Breast epithelium (tissue), 4 donors: ENCODE measurements at regions of chr7 and their contacts with region 1.

Region 1: GRCh38 chr7:66654123-66654732 is 25.5 kb downstream of the KCTD7 start:
- DNase-seq: peak; percentile 97 to 98
- H3K4me3 ChIP-seq: peak overlapping the region; percentile 79 to 89 (median 81)
- H3K27ac ChIP-seq: peak overlapping the region; percentile 98
- H3K4me1 ChIP-seq: no peaks in the 10 kb centered on the region
- H3K27me3 ChIP-seq: no peaks in the 10 kb centered on the region
- CTCF ChIP-seq: peak in 2 of 3 donors; percentile 25 to 36
- POLR2A ChIP-seq: peak; percentile 92

Region 2: GRCh38 chr7:66409479-66409878 is 244.7 kb before region 1 on chr7:
- intact Hi-C with region 1: loop called (anchors 5 kb)
- DNase-seq: no peak
- H3K4me3 ChIP-seq: no peak overlapping the region
- H3K27ac ChIP-seq: no peak overlapping the region
- H3K4me1 ChIP-seq: no peaks in the 10 kb centered on the region
- H3K27me3 ChIP-seq: no peaks in the 10 kb centered on the region
- CTCF ChIP-seq: no peak
- POLR2A ChIP-seq: no peak

Region 3: DNA sequence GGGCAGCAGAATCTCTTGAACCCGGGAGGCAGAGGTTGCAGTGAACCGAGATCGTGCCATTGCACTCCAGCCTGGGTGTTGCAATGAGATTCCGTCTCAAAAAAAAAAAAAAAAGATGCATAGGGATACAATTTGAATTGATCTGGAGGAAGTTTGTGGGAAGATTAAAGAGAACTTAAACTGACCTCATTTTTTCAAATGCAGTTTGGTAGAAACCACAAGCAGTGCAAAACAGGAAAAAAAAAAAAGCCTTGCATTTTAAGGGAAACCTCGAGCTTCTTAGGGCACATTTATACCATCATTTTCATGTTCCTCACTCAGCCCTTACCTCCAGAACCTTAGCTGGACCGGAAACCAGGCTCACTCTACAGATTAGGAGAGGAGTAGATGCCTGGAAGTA is 22.8 kb before region 1 on chr7:
- intact Hi-C with region 1: loop called (anchors 1 kb)
- DNase-seq: no peak
- H3K4me3 ChIP-seq: no peak overlapping the region
- H3K27ac ChIP-seq: peak overlapping the region in 1 of 2 donors; percentile 7
- H3K4me1 ChIP-seq: no peaks in the 10 kb centered on the region
- H3K27me3 ChIP-seq: no peaks in the 10 kb centered on the region
- CTCF ChIP-seq: no peak
- POLR2A ChIP-seq: no peak

Region 4: DNA sequence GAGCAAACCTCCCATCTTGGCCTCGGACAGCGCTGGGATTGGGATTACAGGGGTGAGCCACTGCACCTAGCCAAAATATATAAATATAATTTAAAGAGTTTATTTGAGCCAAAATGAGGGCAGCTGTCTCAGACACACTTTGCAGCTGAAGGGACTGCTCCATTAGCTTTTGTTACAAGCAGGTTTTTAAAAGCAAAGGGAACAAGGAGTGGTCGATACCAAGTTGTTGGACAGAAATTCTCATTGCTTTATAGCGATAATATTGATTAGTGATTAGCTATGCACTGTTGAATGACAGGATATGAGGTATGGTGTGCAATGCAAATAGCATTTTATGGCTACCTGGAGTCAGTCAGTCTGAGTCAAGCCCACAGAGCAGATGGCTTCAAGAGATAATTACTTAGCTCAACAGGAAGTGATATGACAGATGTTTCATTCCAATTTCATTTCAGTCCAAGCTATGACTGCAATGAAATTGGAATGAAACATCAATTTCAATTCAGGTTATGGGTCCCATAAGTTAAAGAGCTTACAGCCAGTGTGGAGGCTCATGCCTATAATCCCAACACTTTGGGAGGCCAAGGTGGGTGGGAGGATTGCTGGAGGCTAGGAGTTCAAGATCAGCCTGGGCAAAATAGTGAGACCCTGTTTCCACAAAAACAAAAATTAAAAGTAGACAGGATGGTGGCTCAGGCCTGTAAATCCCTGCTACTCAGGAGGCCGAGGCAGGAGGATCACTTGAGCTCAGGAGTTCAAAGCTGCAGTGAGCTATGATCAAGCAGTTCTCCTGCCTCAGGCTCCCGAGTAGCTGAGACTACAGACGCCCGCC is 365.5 kb after region 1 on chr7:
- intact Hi-C with region 1: no loop called
- DNase-seq: no peak
- H3K4me3 ChIP-seq: no peak overlapping the region
- H3K27ac ChIP-seq: no peak overlapping the region
- H3K4me1 ChIP-seq: no peaks in the 10 kb centered on the region
- H3K27me3 ChIP-seq: no peaks in the 10 kb centered on the region
- CTCF ChIP-seq: no peak
- POLR2A ChIP-seq: no peak